Body of pancreas (tissue), 4 donors: ENCODE measurements at regions of chr3 and their contacts with region 1.

Region 1: GRCh38 chr3:120753831-120754230 is 11.3 kb downstream of the GTF2E1 start:
- DNase-seq: no peak
- ATAC-seq: no peak
- H3K4me3 ChIP-seq: no peak overlapping the region
- H3K27ac ChIP-seq: no peak overlapping the region
- H3K4me1 ChIP-seq: peaks cover 4% of the 10 kb centered on the region
- H3K27me3 ChIP-seq: no peaks in the 10 kb centered on the region
- CTCF ChIP-seq: no peak
- POLR2A ChIP-seq: no peak

Region 2: GRCh38 chr3:120678331-120678947 is 75.4 kb before region 1 on chr3:
- intact Hi-C with region 1: loop called (anchors 10 kb)
- DNase-seq: peak; percentile 87 to 93 (median 90)
- ATAC-seq: peak; percentile 91
- H3K4me3 ChIP-seq: no peak overlapping the region
- H3K27ac ChIP-seq: peak overlapping the region; percentile 86 to 92 (median 89)
- H3K4me1 ChIP-seq: peaks cover 55% of the 10 kb centered on the region
- H3K27me3 ChIP-seq: no peaks in the 10 kb centered on the region
- CTCF ChIP-seq: no peak
- POLR2A ChIP-seq: peak in 2 of 3 donors; percentile 66 to 76